Activated CD8-positive, alpha-beta memory T cell treated with anti-CD3 and anti-CD28 coated beads, Interleukin-2, amount 10 ng/mL, durations not matched to agents 7 days and 5 days (primary cell): ENCODE measurements at regions of chr9 and their contacts with region 1.

Region 1: DNA sequence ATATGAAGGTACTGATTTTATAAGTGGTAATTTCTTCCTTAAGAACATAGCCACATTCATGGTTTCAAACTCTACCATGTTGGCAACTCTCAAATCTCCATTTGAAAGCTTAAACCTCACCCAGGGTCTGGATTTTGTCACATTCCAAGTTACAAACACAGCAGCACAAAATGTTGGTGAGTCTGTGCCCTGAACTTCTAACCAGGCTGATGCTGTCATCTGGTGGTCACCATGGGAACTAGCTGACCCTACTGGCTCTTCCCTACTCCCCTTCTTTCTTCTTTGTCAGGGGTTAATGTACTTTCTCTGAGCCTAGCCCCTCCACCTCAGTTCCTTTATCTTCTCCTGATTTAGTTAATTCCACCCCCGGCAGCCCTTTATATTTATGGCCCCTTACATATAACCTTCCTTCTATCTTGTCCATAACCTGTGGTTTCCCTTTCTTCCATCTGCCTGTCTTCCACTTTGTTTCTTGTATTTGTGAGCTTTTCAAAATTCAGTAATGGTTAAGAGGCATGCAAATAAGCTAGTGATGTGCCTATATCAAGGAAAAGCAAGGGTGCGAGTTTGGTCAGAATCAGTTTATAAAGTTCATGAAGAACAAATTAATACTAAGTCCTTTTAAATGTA is 35.9 kb downstream of the TGFBR1 start:
- DNase-seq: peak; percentile 61
- ATAC-seq: peak; percentile 77
- H3K4me3 Mint-ChIP-seq: no peak overlapping the region
- H3K27ac Mint-ChIP-seq: peak overlapping the region; percentile 68
- H3K4me1 Mint-ChIP-seq: peaks cover 32% of the 10 kb centered on the region
- H3K27me3 Mint-ChIP-seq: no peaks in the 10 kb centered on the region

Region 2: DNA sequence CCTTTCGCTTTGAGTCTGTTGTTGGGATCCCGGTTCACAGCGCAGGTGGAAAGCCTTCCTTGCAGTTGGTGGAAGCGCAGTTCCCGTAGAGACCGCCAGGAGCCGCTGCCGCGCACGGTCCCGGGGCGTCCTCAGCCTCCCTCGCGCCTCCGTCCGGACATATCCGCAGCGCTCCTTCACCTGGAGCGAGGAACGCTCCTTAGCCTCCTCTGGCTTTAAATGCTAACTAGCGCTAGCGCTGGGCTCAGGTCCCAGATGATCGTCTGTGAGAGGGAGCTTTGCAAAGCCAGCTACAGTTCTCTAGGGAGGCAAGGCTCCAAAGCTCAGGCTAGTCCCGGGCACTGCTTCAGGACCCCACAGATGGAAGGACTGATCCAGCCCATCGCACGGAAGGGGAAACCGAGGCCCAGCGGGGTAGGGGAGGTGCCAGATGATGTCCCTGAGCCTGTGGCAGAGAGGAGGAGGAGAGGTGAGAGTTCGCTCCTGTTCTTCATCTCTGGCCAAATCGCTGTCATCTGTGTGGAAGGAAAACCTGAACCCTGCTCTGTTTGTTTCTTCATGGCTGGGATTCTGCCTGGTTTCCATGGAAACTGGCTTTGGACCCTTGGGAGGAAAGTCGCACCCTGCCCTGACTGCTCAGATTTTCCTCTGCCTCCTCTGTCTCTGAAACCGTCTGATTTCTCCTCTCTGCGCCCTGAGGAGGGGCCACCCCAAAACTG is 165.6 kb before region 1 on chr9:
- CTCF ChIA-PET with region 1: interaction called, 55 read pairs
- DNase-seq: peak; percentile 86
- ATAC-seq: peak; percentile 94
- H3K4me3 Mint-ChIP-seq: peak overlapping the region; percentile 25
- H3K27ac Mint-ChIP-seq: no peak overlapping the region
- H3K4me1 Mint-ChIP-seq: peaks cover 11% of the 10 kb centered on the region
- H3K27me3 Mint-ChIP-seq: peaks cover 37% of the 10 kb centered on the region

Region 3: GRCh38 chr9:99012942-99013512 is 127.8 kb before region 1 on chr9:
- CTCF ChIA-PET with region 1: interaction called, 24 read pairs
- DNase-seq: no peak
- ATAC-seq: peak; percentile 46
- H3K4me3 Mint-ChIP-seq: peak overlapping the region; percentile 58
- H3K27ac Mint-ChIP-seq: peak overlapping the region; percentile 98
- H3K4me1 Mint-ChIP-seq: peaks cover 21% of the 10 kb centered on the region
- H3K27me3 Mint-ChIP-seq: no peaks in the 10 kb centered on the region

Region 4: GRCh38 chr9:99085949-99086948 is 54.6 kb before region 1 on chr9:
- CTCF ChIA-PET with region 1: no interaction called
- DNase-seq: no peak
- ATAC-seq: no peak
- H3K4me3 Mint-ChIP-seq: no peak overlapping the region
- H3K27ac Mint-ChIP-seq: no peak overlapping the region
- H3K4me1 Mint-ChIP-seq: peaks cover 22% of the 10 kb centered on the region
- H3K27me3 Mint-ChIP-seq: peaks cover 3% of the 10 kb centered on the region

Region 5: DNA sequence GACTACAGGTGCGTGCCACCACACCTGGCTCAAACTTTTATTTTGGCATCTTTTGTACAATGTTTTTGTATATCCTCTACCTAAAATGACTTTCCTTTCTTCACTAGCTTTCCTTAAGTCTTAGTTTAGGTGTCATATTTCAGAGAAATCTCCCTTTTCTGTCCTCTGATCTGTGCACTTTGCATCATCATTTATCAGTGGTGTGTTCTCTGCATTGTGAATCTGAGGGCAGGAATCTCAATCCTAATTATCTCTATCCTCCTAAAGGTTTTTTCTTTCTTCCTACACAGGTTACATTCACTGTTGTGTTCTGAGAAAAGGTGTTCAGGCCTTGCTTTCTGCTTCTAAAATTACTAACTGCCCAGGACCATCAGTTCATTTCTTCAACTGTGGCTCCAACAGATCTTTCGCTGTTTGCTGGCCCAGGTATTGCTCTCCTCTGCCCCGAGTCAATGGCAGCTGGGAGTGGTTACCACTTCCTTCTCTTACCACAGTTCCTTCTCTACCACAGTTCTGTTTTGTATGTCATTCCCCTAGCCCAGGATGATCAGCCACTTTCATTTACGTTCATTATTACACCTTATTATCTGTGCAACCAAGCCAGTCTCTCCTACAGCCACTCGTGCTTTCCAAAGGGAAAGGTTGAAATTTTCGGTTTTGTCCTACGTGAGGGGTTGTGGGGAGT is 21.9 kb before region 1 on chr9:
- CTCF ChIA-PET with region 1: interaction called, 24 read pairs
- DNase-seq: peak; percentile 86
- ATAC-seq: peak; percentile 99
- H3K4me3 Mint-ChIP-seq: peak overlapping the region; percentile 67
- H3K27ac Mint-ChIP-seq: peak overlapping the region; percentile 95
- H3K4me1 Mint-ChIP-seq: peaks cover 77% of the 10 kb centered on the region
- H3K27me3 Mint-ChIP-seq: no peaks in the 10 kb centered on the region

Region 6: GRCh38 chr9:99197987-99198386 is 57.2 kb after region 1 on chr9:
- CTCF ChIA-PET with region 1: no interaction called
- DNase-seq: no peak
- ATAC-seq: no peak
- H3K4me3 Mint-ChIP-seq: no peak overlapping the region
- H3K27ac Mint-ChIP-seq: no peak overlapping the region
- H3K4me1 Mint-ChIP-seq: peaks cover 26% of the 10 kb centered on the region
- H3K27me3 Mint-ChIP-seq: peaks cover 6% of the 10 kb centered on the region

Region 7: GRCh38 chr9:99244344-99245260 is 103.8 kb after region 1 on chr9:
- CTCF ChIA-PET with region 1: no interaction called
- DNase-seq: no peak
- ATAC-seq: no peak
- H3K4me3 Mint-ChIP-seq: no peak overlapping the region
- H3K27ac Mint-ChIP-seq: peak overlapping the region; percentile 52
- H3K4me1 Mint-ChIP-seq: peaks cover 22% of the 10 kb centered on the region
- H3K27me3 Mint-ChIP-seq: no peaks in the 10 kb centered on the region